ENCODE measurements at regions of chr15 and their contacts with region 1.

Region 1: DNA sequence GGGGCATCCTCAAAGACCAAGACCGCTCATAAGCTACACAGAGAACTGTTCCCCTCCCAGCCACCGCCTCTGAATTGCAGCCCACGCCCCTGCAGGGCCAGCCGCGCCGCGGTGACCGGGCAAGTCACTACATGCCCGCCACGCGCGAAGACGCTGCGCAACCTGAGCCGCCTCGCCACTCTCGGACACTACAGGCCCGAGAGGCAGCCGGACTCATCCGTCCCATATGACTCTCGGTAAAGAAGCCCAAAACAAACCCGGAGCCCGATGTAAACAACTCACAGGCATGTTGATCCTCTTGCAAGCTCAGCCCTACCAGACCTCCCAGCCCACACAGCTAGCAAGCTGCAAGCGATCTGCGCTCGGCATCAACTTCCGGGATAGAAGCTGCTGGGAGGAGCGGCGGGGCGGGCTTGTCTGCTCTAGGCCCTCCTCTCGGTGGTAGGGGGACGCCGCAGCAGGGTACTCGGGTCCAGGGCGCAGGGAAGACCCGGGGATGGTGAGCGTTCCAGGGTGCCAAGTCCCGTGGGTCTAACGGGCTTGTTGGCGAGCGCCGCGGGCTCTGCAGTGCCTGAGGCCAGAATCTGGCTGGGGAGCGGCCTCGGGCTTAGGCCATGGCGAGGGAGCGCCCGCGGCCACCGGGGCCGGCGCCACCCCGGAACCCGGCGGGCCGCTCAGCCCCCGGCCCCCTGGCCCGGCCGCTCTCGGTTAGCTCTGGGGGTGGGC is at the start of gene RPS27L:
- DNase-seq: peak; percentile 93
- H3K4me3 Mint-ChIP-seq: peak within 1 kb of the TSS; percentile 99
- H3K27ac Mint-ChIP-seq: peak within 1 kb of the TSS; percentile 98
- H3K4me1 Mint-ChIP-seq: peaks cover 18% of the 10 kb centered on the region
- H3K27me3 Mint-ChIP-seq: no peaks in the 10 kb centered on the region
- total RNA-seq, gene RPS27L: 220 to 222 TPM

Region 2: GRCh38 chr15:62896978-62897647 is 260.2 kb before region 1 on chr15:
- CTCF ChIA-PET with region 1: no interaction called
- intact Hi-C with region 1: no loop called
- DNase-seq: no peak
- H3K4me3 Mint-ChIP-seq: no peak overlapping the region
- H3K27ac Mint-ChIP-seq: no peak overlapping the region
- H3K4me1 Mint-ChIP-seq: no peaks in the 10 kb centered on the region
- H3K27me3 Mint-ChIP-seq: no peaks in the 10 kb centered on the region

Region 3: DNA sequence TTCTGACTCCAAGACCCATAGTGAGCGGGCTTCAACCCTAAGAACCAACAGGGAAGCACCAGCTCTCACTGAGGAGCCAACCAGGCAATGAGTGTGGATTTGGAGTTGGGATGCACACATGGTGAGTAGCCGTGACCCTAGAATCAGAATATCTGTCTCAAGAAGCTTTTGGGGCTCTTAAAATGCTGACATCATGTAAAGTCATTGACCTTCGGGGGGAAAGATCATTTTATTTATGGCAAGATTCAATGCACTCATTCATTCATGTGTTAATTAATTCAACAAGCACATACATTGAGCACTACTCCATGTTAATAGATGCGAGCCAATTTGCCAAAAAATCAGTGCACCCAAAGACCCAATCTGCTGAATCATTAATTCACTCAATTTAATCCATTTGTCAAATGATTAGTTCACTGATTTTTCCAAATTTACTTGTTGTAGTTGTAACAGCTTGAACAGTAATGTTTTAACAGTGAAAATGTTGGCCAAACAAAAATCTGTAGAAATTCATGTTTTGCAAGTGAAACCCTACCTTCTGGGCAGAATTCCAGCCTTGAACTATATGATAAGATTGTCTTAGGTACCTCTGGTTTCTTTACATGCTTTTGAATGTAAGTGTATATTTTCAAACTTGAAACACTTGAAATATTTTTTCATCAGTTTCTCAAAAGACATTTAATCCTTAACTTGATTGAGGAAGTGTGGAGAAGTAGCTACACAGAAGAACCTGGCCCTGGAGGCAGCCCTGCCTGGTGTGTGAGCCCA is 65.4 kb before region 1 on chr15:
- CTCF ChIA-PET with region 1: no interaction called
- intact Hi-C with region 1: no loop called
- DNase-seq: no peak
- H3K4me3 Mint-ChIP-seq: no peak overlapping the region
- H3K27ac Mint-ChIP-seq: no peak overlapping the region
- H3K4me1 Mint-ChIP-seq: no peaks in the 10 kb centered on the region
- H3K27me3 Mint-ChIP-seq: no peaks in the 10 kb centered on the region

Region 4: DNA sequence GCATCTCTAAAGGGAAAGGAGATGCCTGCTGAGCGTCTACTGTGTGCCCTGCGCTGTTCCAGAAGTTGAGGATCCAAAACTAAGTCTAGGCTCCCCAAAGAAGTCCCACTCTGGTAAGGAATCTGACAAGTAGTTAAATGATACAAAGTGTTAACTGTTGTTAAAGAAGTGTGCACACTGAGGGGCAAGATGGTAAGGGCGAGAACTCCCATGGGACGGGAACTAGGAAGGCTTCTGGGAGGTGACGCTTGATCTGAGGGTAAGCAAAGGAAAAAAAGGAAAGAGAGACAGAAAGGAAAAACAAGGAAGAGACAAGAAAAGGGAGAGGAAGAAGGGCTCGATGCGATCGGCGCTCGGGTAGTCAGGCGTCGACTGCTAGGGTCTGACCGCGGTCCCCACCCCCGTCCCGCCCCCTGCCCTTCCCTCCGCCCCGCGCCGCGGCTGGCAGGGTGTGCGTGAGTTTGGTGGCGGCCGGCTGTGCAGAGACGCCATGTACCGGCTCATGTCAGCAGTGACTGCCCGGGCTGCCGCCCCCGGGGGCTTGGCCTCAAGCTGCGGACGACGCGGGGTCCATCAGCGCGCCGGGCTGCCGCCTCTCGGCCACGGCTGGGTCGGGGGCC is 35.8 kb before region 1 on chr15 and contains the start of gene LACTB:
- CTCF ChIA-PET with region 1: no interaction called
- intact Hi-C with region 1: loop called (anchors 1 kb)
- DNase-seq: peak; percentile 86
- H3K4me3 Mint-ChIP-seq: peak within 1 kb of the TSS; percentile 71
- H3K27ac Mint-ChIP-seq: peak within 1 kb of the TSS; percentile 61
- H3K4me1 Mint-ChIP-seq: peaks cover 14% of the 10 kb centered on the region
- H3K27me3 Mint-ChIP-seq: no peaks in the 10 kb centered on the region
- total RNA-seq, gene LACTB: 18.3 to 18.7 TPM

Region 5: GRCh38 chr15:63135804-63136203 is 21.5 kb before region 1 on chr15:
- CTCF ChIA-PET with region 1: no interaction called
- intact Hi-C with region 1: no loop called
- DNase-seq: no peak
- H3K4me3 Mint-ChIP-seq: no peak overlapping the region
- H3K27ac Mint-ChIP-seq: no peak overlapping the region
- H3K4me1 Mint-ChIP-seq: peaks cover 13% of the 10 kb centered on the region
- H3K27me3 Mint-ChIP-seq: no peaks in the 10 kb centered on the region

Region 6: DNA sequence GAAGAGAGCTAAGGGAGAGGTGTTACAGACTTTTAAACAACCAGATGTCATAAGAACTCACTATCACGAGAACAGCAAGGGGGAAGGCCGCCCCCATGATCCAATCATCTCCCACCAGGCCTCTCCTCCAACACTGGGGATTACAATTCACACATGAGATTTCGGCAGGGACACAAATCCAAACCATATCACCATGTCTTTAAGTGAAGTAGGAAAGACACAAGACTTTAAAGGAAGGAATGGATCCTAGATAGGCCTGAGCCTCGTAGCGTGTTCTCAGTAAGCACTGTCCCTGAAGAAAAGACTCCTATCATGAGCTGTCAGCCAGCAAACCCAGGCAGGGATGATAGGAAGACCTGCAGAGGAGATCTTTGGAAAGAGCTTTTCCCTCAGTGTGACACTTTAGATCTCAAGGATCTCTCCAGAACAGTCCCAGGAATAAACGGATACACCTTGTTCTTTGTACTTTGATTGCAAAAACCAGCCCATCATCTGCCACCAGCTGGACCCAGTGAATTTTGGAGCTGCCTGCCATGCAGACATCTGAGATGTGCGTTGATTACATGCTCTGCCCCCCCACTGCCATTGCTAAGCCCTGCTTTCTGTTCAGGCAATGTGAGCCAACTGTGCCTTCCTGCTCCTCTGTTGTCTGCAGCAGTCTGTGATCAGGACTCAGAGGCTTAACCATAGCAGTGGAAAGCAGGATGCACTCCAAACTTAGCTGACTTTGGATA is 15.3 kb after region 1 on chr15:
- CTCF ChIA-PET with region 1: interaction called, 3 read pairs
- intact Hi-C with region 1: loop called (anchors 1 kb)
- DNase-seq: no peak
- H3K4me3 Mint-ChIP-seq: no peak overlapping the region
- H3K27ac Mint-ChIP-seq: no peak overlapping the region
- H3K4me1 Mint-ChIP-seq: peaks cover 14% of the 10 kb centered on the region
- H3K27me3 Mint-ChIP-seq: no peaks in the 10 kb centered on the region

Region 7: DNA sequence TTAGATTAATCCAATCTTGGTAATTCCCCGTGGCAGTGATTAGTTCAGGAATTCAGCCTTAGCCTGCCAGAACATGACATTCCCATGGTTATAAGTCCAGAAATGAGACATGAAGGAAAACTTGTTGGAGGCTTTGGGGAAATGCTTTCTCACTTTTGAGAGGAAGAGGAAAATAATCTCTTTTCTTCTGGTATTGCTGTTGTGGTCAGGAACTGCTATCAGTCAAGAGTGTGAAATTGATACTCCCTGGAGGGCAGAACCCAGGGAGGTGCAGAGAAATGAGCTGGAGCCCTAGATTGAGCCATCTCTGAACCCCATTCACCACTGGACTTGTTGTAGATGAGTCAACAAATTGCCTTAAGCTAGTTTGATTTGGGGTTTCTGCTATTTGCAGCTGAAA is 81.5 kb after region 1 on chr15:
- CTCF ChIA-PET with region 1: no interaction called
- intact Hi-C with region 1: loop called (anchors 5 kb)
- DNase-seq: peak; percentile 48
- H3K4me3 Mint-ChIP-seq: no peak overlapping the region
- H3K27ac Mint-ChIP-seq: no peak overlapping the region
- H3K4me1 Mint-ChIP-seq: peaks cover 72% of the 10 kb centered on the region
- H3K27me3 Mint-ChIP-seq: no peaks in the 10 kb centered on the region

Region 8: DNA sequence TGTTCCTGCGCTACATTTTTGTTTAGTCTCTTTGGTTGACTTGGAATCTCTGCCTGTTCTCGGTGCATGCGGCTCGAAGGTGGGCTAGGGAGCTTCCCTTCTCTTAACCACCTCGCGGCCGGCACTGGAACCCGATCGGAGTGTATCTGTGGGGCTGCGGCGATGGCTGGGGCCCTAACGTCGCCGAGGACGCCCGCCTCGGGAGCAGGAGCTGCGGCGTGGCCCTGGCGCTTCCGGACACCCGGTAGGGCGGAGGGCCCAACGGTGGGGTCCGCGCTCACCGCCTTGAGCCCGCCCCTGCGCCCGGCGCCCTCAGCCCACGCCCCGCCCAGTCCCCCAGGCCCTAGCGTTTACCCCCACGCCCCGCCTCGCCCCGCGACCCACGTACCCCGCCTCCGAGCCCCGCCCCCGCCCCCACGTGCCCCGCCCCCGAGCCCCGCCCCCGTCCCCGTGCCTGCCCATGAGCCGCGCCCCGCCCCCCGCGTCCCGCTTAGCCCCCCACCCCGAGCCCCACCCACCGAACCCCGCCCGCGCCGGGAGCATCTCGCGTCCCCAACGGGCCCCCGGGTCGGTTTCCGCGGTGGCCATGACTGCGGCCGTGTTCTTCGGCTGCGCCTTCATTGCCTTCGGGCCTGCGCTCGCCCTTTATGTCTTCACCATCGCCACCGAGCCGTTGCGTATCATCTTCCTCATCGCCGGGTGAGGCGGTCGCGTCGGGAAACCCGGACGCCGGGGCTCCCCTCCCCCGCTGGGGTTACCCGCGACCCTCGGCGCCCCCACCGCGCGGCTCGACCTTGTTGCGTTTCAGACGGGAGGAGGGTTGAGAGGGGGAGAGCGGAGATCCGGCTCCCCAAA is 120.0 kb after region 1 on chr15 and contains the start of gene APH1B:
- CTCF ChIA-PET with region 1: no interaction called
- intact Hi-C with region 1: loop called (anchors 2 kb)
- DNase-seq: peak; percentile 63
- H3K4me3 Mint-ChIP-seq: peak within 1 kb of the TSS; percentile 89
- H3K27ac Mint-ChIP-seq: peak within 1 kb of the TSS; percentile 75
- H3K4me1 Mint-ChIP-seq: peaks cover 33% of the 10 kb centered on the region
- H3K27me3 Mint-ChIP-seq: no peaks in the 10 kb centered on the region
- total RNA-seq, gene APH1B: 6.7 to 8.6 TPM

Measured in activated naive CD4-positive, alpha-beta T cell treated with anti-CD3 and anti-CD28 coated beads for 36 hours (primary cell).